IMR-90 (cell line): ENCODE measurements at regions of chr3 and their contacts with region 1.

Region 1: DNA sequence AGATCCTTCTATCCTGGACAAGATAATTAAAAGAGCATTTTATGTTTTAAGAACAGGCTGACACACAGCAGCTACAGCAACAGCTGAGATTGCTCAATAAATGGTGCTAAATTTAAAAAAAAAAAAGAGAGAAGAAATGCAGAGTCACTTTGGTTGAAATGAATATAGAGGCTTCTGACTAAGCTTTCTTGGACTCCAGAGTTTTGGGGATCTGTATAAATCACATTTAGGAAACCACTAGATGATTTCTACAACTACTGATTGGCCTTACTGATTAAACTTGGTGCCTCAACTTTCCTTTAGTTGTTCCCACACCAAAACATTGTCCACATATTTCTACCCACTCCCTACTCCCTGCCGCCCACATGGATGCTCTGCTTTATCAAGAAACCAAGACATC is 132.9 kb upstream of the ZBTB20 start:
- DNase-seq: peak; percentile 38
- ATAC-seq: peak; percentile 21; the same call in 1 of the 2 replicates
- H3K4me3 ChIP-seq: no peak overlapping the region
- H3K27ac ChIP-seq: no peak overlapping the region
- H3K4me1 ChIP-seq: no peaks in the 10 kb centered on the region
- H3K27me3 ChIP-seq: no peaks in the 10 kb centered on the region
- CTCF ChIP-seq: no peak
- POLR2A ChIP-seq: no peak
- RAD21 ChIP-seq: no peak

Region 2: GRCh38 chr3:115293321-115293720 is 13.4 kb after region 1 on chr3:
- CTCF ChIA-PET with region 1: no interaction called
- POLR2A ChIA-PET with region 1: no interaction called
- dilution Hi-C with region 1: no loop called
- in situ Hi-C with region 1: no loop called
- intact Hi-C with region 1: no loop called
- DNase-seq: no peak
- ATAC-seq: no peak
- H3K4me3 ChIP-seq: no peak overlapping the region
- H3K27ac ChIP-seq: no peak overlapping the region
- H3K4me1 ChIP-seq: no peaks in the 10 kb centered on the region
- H3K27me3 ChIP-seq: no peaks in the 10 kb centered on the region; the same call in 1 of the 2 replicates
- CTCF ChIP-seq: 0 out of 2 replicates have a peak, but pooled peaks have one; percentile 1
- POLR2A ChIP-seq: no peak
- RAD21 ChIP-seq: no peak

Region 3: DNA sequence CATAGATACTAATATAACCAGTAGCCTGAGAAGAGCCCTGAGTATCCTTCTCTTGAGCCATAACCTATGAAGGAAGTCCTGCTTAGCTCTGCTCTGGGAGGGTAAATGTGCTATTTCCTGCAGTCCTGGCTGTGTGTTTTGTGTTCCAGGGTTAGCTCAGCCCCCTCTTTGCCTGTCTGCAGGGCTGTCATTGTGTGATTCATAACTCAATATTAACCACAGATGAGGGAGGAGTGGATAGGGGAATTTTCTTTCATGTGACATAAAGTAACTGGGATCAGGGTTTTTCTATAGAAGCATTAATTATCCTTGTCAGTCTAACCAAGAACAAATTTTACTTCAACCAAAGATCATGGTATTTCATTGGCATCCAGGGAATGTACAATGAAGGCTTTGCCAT is 50.5 kb after region 1 on chr3:
- CTCF ChIA-PET with region 1: no interaction called
- POLR2A ChIA-PET with region 1: no interaction called
- dilution Hi-C with region 1: no loop called
- in situ Hi-C with region 1: no loop called
- intact Hi-C with region 1: loop called (anchors 5 kb)
- DNase-seq: peak; percentile 51
- ATAC-seq: no peak
- H3K4me3 ChIP-seq: no peak overlapping the region
- H3K27ac ChIP-seq: no peak overlapping the region
- H3K4me1 ChIP-seq: no peaks in the 10 kb centered on the region
- H3K27me3 ChIP-seq: no peaks in the 10 kb centered on the region
- CTCF ChIP-seq: no peak
- POLR2A ChIP-seq: no peak
- RAD21 ChIP-seq: no peak